Astrocyte of the cerebellum (primary cell): ENCODE measurements at regions of chr15 and their contacts with region 1.

Region 1: DNA sequence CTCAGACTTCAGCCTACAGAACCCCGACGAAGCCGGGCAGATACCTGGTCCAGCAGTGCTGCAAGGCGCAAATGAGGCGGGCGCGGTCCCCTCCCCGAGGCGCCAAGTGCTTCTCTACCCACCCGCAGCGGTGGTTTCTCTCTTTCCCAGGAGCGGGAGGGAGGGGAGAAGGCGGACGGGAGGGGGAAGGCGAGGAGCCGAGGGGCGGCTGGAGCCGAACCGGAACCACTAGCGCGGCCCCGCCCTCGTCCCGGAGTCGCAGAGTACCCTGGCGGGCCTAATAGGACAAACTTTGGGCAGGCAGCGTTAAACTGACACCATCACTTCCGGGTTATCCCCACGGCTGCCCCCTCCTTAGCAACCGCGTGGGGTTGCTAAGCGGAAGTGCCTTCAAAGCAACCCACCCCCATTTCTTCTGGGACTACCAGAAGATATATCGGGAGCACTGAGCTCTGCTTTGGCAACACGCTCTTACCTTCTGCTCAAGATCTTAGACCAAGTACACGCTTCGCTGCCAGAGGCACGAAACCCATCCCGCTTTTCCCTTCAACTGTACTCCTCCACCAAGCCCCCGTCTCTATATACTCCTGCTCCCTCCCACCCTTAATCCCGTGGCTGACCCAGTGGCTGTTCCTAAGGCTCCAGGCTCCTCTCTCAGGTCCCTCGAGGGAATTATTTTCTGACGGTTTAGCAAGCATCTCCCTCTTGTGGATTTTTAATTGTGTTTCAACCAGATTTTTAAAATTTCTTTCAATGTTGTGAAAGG is at the start of gene CSNK1G1:
- DNase-seq: peak; percentile 95
- H3K4me3 ChIP-seq: peak within 1 kb of the TSS; percentile 95
- CTCF ChIP-seq: peak; percentile 38

Region 2: GRCh38 chr15:64209680-64210334 is 146.3 kb before region 1 on chr15:
- in situ Hi-C with region 1: loop called (anchors 25 kb)
- DNase-seq: peak; percentile 46
- H3K4me3 ChIP-seq: no peak overlapping the region
- CTCF ChIP-seq: peak; percentile 36